ENCODE measurements at regions of chr7 and their contacts with region 1.

Region 1: DNA sequence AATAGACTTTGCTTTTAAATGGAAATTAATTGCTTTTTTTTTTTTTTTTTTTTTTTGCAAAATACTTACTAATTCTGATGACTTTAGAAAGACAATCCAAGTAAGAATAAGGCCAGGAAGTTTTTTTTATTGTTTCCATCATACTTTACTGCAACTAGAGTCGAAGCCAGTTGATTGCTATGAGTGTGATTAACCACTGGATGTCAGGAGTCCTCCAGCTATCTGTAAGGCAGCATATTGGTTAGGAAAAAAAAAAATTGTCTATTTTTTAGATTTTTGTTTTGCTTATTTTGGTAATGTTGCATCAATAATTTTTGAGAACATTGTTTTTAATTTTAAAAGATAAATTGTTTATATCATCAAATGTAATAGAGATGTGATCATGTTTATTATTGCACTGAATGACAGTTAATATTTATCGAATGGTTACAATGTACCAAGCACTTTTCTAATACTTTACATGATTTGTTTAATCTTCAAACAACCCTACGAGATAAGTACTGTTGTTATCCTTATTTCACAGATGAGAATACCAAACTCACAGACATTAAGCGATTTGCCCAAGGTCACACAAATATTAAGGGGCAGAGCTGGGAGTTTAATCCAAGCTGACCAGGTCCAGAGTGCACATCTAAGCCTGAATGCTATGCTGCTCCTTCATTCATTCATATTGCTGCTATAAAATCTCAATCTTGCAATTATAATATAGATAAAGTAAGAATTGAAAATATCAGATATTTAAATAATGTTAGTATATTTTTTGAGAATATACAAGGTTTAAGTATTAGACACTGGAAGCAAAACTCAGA is 19.9 kb upstream of the LMOD2 start:
- DNase-seq: no peak

Region 2: DNA sequence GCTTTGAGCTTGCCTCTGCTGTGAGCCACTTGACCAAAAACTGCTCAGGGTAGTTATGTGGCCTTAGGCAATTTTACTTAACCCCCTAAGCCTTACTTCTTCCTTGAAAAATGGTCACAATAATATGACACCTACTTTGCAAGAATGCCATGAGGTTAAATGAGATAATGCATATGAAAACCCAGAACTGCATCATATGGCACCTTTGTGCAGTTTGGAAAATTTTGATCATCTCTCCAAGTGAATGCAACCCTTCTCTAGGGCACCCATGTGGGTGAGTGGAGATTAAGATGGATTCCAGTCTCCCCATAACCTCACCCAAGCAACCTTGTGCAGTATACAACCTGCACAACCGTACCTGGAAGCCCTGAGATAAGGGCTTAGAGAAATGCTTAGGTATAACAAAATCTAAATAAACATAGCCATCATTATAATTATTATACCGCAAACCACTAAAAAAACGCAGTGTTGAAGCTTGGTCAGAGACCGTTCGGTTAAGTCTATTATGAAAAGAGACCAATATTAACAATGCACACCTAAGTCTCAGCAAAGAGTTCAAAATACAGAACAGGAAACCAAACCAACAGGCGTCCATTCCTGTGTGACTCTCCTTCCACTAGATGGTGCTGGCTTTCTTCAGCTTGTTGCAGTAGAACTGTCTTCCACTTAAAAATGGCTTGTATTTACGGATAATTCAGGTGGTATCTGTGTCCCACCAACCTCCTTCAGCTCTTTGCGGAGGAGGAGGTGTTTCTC is 55.2 kb before region 1 on chr7:
- intact Hi-C with region 1: loop called (anchors 5 kb)
- DNase-seq: no peak

Region 3: DNA sequence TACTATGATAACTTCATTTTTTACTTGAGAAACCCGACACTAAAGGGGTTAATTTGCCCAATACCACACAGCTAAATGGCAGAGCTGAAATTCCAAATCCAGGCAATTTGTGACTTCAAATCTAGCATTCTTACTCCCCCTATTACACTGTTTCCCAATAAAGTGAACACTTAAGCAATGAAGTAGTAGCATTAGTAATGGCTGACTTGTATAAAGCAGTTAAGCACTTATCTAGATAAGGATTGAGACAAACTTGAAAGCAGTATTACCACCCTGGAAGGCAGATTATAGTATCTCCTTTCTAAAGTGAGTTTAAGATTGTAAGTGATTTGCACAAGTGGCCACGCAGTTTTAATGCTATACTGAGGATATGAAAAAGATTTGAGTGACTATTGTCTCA is 73.8 kb after region 1 on chr7:
- intact Hi-C with region 1: loop called (anchors 5 kb)
- DNase-seq: no peak